Activated T-helper 1 cell treated with anti-CD3 and anti-CD28 coated beads, Interleukin-12 subunit alpha, Interleukin-12 subunit beta, Interleukin-2, Interleukin-4 antibody, amounts not matched to agents 30 ng/mL and 10 ng/mL and 1 ng/mL, durations not matched to agents 14 hours and 24 hours and 36 hours (primary cell): ENCODE measurements at regions of chr1 and their contacts with region 1.

Region 1: DNA sequence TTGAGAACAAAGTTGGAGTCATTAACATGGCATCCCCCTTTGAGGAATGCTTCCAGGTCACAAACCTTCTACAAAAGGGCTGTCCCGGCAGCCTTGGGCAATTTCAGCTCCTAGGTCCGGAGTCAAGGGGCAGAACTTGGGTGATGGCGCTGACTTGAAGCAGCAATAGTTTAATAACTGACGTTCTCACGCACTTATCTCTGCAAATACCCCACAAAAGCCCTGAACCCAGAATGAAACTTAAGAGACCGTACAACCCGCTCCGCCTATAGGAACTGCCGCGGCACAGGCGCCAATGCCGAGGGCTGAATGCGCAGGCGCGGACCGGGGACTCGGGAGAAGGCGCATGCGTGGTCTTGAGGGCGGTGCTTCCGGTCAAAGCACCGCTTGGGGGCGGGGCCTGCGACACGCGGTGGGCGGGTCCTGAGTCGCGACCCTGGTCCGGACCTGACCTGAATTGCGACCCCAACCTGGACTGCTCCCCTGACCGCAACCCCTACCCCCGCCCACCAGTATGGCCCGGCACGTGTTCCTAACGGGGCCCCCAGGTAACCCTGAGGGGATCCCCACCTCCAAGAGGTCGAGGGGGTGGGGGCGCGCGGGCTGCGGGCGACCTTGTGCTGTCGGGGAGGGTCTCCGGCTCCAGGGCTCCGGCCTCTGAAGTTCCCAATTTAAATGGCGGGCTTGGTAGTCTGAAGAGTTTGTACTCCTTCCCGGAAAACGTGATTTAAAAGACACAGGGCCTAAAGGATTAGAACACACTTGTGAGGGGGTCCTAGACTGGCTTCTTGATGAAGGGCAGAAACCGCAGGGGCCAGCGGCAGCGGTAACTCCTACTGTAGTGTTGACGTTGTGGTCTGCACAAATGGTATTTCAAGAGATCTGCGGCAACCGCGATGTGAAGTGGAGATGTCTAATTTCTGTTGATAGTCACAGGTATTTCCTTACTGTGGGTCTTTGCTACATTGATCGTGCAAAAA is at the start of gene NTPCR:
- DNase-seq: peak; percentile 94
- H3K4me3 Mint-ChIP-seq: peak within 1 kb of the TSS; percentile 95
- H3K27ac Mint-ChIP-seq: peak within 1 kb of the TSS; percentile 93
- H3K4me1 Mint-ChIP-seq: peaks cover 43% of the 10 kb centered on the region
- H3K27me3 Mint-ChIP-seq: no peaks in the 10 kb centered on the region
- total RNA-seq, gene NTPCR: 24.5 and 26.8 TPM in 2 replicates

Region 2: GRCh38 chr1:232578651-232579195 is 371.8 kb before region 1 on chr1:
- intact Hi-C with region 1: loop called (anchors 2 kb)
- DNase-seq: peak; percentile 23
- H3K4me3 Mint-ChIP-seq: peak overlapping the region; percentile 64
- H3K27ac Mint-ChIP-seq: peak overlapping the region; percentile 79
- H3K4me1 Mint-ChIP-seq: peaks cover 63% of the 10 kb centered on the region
- H3K27me3 Mint-ChIP-seq: no peaks in the 10 kb centered on the region

Region 3: GRCh38 chr1:232726048-232726779 is 224.3 kb before region 1 on chr1:
- intact Hi-C with region 1: loop called (anchors 5 kb)
- DNase-seq: no peak
- H3K4me3 Mint-ChIP-seq: no peak overlapping the region
- H3K27ac Mint-ChIP-seq: no peak overlapping the region
- H3K4me1 Mint-ChIP-seq: peaks cover 11% of the 10 kb centered on the region
- H3K27me3 Mint-ChIP-seq: peaks cover 7% of the 10 kb centered on the region

Region 4: GRCh38 chr1:232876506-232877364 is 73.8 kb before region 1 on chr1:
- intact Hi-C with region 1: loop called (anchors 2 kb)
- DNase-seq: no peak
- H3K4me3 Mint-ChIP-seq: no peak overlapping the region
- H3K27ac Mint-ChIP-seq: peak overlapping the region; percentile 49
- H3K4me1 Mint-ChIP-seq: peaks cover 17% of the 10 kb centered on the region
- H3K27me3 Mint-ChIP-seq: no peaks in the 10 kb centered on the region

Region 5: DNA sequence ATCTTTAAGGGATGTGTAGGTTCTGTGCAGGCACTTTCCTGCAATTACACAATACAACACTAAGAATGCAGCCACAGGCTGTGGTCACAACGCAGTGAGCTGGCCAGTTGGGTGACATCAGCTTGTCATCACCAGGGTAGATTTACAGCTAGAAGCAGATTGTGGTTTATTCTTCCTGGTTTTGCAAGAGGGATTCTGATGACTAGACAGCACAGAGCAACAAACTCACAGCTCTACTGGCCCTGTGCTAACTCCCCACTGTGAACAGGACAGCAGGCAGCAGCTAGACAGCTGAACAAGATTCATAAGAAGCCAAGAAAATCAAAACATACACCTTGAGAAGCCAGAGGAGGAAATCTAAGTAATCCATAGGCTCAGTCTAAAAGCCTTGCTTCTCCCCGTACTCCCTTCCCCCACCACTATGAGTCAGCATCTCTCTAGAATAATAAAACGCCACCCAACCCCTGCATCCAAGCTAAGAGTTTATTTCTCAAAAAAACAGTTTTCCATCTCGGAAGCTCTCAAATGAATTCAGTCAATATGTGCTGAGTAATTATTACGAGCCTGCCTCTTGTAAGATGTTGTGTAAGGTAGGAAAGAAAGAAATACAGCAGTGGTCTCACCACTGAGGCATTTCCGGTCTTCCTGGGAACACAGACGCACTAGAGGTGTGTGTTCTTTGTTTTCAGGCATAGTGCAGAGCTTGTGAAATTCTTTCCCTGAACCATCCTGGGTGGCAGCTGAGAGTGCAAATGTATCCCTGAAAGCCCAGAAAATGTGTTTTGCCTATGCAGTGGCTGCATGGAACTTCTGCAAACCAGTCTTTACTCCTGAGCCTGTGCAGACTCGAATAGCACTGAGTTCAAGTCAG is 162.8 kb after region 1 on chr1:
- intact Hi-C with region 1: loop called (anchors 10 kb)
- DNase-seq: peak; percentile 52
- H3K4me3 Mint-ChIP-seq: peak overlapping the region; percentile 52
- H3K27ac Mint-ChIP-seq: peak overlapping the region; percentile 89
- H3K4me1 Mint-ChIP-seq: peaks cover 55% of the 10 kb centered on the region
- H3K27me3 Mint-ChIP-seq: no peaks in the 10 kb centered on the region

Region 6: DNA sequence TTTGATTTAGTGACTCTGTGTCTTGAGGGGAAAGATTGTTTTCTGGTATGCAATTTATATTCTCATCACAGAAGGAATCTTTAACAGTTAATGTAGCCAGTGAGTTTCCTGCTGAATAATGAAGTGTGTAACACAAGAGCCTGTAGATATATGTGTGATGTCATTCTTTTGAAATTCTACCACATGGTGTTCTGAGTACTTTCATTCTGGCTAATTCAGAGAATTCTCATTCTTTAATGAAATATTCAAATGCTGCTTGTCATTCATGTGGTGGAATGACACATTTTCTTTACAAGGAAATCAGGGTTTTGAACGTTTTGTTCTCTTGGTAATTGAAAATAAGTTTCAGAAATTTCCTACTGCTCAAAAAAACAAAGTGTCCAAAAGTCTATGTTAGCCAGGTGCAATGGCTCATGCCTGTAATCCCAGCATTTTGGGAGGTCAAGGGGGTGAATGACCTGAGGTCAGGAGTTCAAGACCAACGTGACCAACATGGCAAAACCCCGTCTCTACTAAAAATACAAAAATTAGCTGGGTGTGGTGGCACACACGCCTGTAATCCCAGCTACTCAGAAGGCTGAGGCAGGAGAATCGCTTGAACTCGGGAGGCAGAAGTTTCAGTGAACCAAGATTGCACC is 456.6 kb after region 1 on chr1:
- intact Hi-C with region 1: loop called (anchors 2 kb)
- DNase-seq: no peak
- H3K4me3 Mint-ChIP-seq: no peak overlapping the region
- H3K27ac Mint-ChIP-seq: peak overlapping the region; percentile 64
- H3K4me1 Mint-ChIP-seq: peaks cover 22% of the 10 kb centered on the region
- H3K27me3 Mint-ChIP-seq: peaks cover 9% of the 10 kb centered on the region